ENCODE measurements at regions of chr17 and their contacts with region 1.

Region 1: GRCh38 chr17:66567234-66568170 is 265.1 kb downstream of the PRKCA start:
- DNase-seq: peak; percentile 61 to 87 (median 80)
- ATAC-seq: peak; percentile 73
- H3K4me3 ChIP-seq: no peak overlapping the region
- H3K4me3 Mint-ChIP-seq: no peak overlapping the region
- H3K27ac ChIP-seq: no peak overlapping the region
- H3K27ac Mint-ChIP-seq: no peak overlapping the region
- H3K4me1 ChIP-seq: no peaks in the 10 kb centered on the region
- H3K4me1 Mint-ChIP-seq: peaks cover 28% of the 10 kb centered on the region
- H3K27me3 ChIP-seq: no peaks in the 10 kb centered on the region
- H3K27me3 Mint-ChIP-seq: no peaks in the 10 kb centered on the region
- CTCF ChIP-seq: peak; percentile 89

Region 2: DNA sequence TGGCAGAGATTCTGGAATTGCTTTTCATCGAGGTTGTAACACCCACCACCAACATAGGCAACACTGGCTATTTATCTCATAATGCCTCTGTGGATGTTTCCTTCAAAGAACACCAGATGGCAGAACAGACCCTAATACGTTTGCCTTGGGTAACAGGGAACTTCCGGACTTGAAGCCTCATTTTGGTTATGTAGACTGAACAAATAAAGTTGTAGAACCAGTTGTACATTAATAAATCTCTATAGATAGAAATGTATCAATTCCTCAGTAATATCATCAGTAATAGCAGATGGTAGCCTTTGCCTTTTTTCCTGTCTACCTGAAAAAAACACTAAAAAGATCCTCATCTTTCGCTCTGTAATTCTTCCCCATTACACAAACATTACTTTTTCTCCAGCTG is 312.4 kb before region 1 on chr17:
- CTCF ChIA-PET with region 1: interaction called, 35 read pairs
- POLR2A ChIA-PET with region 1: no interaction called
- intact Hi-C with region 1: loop called (anchors 1 kb)
- DNase-seq: peak in 7 of 9 experiments; percentile 13 to 87 (median 35)
- ATAC-seq: peak; percentile 91
- H3K4me3 ChIP-seq: no peak overlapping the region
- H3K4me3 Mint-ChIP-seq: peak overlapping the region; percentile 59
- H3K27ac ChIP-seq: no peak overlapping the region
- H3K27ac Mint-ChIP-seq: peak overlapping the region; percentile 70
- H3K4me1 ChIP-seq: peaks cover 13% of the 10 kb centered on the region
- H3K4me1 Mint-ChIP-seq: peaks cover 21% of the 10 kb centered on the region
- H3K27me3 ChIP-seq: no peaks in the 10 kb centered on the region
- H3K27me3 Mint-ChIP-seq: no peaks in the 10 kb centered on the region
- CTCF ChIP-seq: peak; percentile 77

Region 3: DNA sequence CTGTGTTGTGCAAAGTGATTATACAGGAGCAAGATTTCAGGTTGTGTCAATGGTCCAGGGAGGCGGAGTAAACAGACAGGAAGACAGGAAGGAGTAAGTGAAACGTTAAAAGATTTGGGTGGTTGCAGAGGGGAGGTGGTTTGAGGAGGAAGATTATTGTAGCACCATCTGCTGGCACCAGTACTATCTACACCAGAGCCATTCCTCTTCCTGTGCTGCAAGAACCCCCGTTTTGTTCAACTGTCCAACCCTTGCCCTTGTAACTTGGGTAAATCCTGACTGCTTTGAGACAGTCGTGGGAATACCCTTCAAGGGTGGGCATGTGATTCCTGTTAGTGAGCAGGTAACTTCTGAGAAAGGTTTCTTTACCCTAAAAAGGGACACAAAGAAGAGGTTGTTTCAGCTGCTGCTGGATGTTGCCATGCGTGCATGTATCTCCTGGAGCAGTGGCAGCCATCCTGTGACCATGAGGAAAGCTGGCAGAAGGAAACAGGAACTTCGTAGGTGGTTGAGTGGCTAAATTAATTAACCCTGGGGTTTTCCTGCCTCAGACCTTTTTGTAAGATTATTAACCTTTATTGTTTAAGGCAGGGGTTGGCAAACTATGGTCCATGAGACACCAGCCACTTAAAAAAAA is 141.0 kb before region 1 on chr17:
- CTCF ChIA-PET with region 1: interaction called, 4 read pairs
- POLR2A ChIA-PET with region 1: no interaction called
- intact Hi-C with region 1: loop called (anchors 1 kb)
- DNase-seq: peak; percentile 14 to 81 (median 49)
- ATAC-seq: peak; percentile 98
- H3K4me3 ChIP-seq: no peak overlapping the region
- H3K4me3 Mint-ChIP-seq: peak overlapping the region; percentile 48
- H3K27ac ChIP-seq: no peak overlapping the region
- H3K27ac Mint-ChIP-seq: peak overlapping the region; percentile 82
- H3K4me1 ChIP-seq: peaks cover 19% of the 10 kb centered on the region
- H3K4me1 Mint-ChIP-seq: peaks cover 64% of the 10 kb centered on the region
- H3K27me3 ChIP-seq: no peaks in the 10 kb centered on the region
- H3K27me3 Mint-ChIP-seq: no peaks in the 10 kb centered on the region
- CTCF ChIP-seq: peak; percentile 48

Region 4: GRCh38 chr17:66673668-66674315 is 106.3 kb after region 1 on chr17:
- CTCF ChIA-PET with region 1: interaction called, 4 read pairs
- POLR2A ChIA-PET with region 1: no interaction called
- intact Hi-C with region 1: loop called (anchors 5 kb)
- DNase-seq: peak; percentile 6 to 87 (median 57)
- ATAC-seq: peak; percentile 86
- H3K4me3 ChIP-seq: no peak overlapping the region
- H3K4me3 Mint-ChIP-seq: peak overlapping the region; percentile 23
- H3K27ac ChIP-seq: peak overlapping the region in 1 of 2 experiments; percentile 45
- H3K27ac Mint-ChIP-seq: peak overlapping the region; percentile 91
- H3K4me1 ChIP-seq: peaks cover 23% of the 10 kb centered on the region
- H3K4me1 Mint-ChIP-seq: peaks cover 56% of the 10 kb centered on the region
- H3K27me3 ChIP-seq: no peaks in the 10 kb centered on the region
- H3K27me3 Mint-ChIP-seq: no peaks in the 10 kb centered on the region
- CTCF ChIP-seq: peak; percentile 56